PC-3 (cell line): ENCODE measurements at regions of chr21 and their contacts with region 1.

Region 1: DNA sequence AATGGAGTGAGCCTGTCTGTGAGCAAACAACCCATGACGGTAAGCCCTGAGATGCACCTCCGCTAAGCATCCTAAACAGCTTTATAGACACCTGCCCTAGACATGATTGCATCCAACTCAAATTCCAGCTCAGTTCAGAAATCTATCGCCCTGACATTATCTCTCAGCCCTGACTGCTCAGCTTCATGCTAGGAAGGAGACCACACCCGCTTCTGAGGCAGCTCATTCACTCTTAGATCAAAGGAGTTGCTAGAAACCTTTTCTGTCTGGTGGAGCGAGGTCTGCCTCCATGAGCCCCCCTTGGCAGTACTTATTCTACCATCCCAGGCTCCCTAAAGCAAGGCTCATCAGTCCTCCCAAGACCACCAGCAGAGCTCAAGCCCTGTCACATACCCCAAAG is 17.0 kb downstream of the IL10RB start:
- DNase-seq: no peak
- ATAC-seq: no peak
- H3K4me3 ChIP-seq: no peak overlapping the region
- H3K27ac ChIP-seq: no peak overlapping the region
- H3K4me1 ChIP-seq: peaks cover 15% of the 10 kb centered on the region
- H3K27me3 ChIP-seq: no peaks in the 10 kb centered on the region
- CTCF ChIP-seq: no peak

Region 2: DNA sequence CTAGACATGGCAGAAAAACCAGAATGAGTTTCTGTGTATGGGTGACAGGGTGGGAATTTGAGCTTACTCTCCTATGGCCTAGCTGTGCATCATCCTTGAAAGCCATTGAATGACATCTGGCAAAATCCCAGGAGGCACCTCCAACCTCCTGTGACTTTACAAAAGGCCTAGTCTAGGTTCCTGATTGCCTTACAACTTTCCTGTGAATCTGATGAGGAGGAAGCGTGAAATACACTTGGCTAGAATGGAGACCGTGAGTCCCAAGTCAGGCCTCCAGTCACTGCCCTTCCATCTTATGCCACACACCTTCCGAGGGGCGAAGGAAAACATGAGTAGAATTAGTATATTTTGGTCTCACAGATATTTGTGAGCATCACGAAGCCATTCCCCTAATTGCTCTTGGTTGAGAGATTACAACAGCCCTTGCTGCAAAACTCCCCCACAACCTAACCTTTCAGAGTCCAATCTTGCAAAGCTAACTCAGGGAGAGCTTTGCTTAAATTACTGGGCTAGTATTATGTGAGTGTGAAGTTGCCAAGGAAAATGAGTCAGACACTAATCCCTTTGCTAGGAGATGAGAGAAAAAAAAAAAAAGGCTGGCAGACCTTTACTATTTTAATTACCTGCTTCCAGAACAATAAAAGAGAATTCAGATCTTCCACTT is 475.4 kb before region 1 on chr21:
- CTCF ChIA-PET with region 1: interaction called, 11 read pairs
- POLR2A ChIA-PET with region 1: no interaction called
- intact Hi-C with region 1: no loop called
- DNase-seq: peak; percentile 25
- ATAC-seq: peak; percentile 77
- H3K4me3 ChIP-seq: no peak overlapping the region
- H3K27ac ChIP-seq: no peak overlapping the region
- H3K4me1 ChIP-seq: no peaks in the 10 kb centered on the region
- H3K27me3 ChIP-seq: 0 out of 2 replicates have a peak, but pooled peaks cover 8% of the 10 kb centered on the region
- CTCF ChIP-seq: no peak

Region 3: DNA sequence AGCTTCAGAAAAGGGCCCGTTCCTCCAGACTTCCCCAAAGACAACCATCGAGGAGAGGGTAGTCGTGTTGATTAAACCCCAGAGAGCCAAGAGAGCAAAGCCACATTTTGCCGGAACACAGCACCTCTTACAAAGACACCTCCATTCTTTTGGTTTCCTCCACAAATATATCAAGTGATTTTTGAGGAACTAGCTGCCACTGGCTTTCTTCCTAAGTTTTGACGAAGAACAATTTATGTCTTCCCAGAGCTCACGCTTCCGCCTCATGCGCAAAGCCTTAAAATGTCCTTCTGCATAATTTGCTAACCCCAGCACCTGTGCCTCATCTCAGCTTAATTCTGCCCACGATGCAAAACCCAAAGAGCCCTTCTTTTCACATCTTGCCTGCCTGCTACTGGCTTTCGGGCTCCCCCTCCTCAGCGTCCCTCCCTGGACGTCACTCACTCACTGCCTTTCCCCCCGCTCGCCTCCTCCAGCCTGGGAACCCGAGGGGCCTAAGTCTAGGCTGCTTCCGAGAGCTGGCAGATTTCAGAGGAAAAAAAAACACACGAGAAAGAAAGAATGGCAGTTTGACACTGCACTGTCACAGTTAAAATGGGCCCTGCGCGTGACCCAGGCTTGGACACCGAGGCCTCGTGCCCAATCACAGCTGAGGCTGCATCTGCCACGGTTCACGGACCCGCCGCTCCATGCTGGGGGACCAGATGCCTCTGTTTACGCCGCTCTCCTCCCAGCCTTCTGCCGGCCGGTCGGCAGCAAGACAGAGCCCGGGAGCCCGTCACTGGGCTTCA is 131.1 kb before region 1 on chr21:
- CTCF ChIA-PET with region 1: no interaction called
- POLR2A ChIA-PET with region 1: no interaction called
- intact Hi-C with region 1: no loop called
- DNase-seq: no peak
- ATAC-seq: no peak
- H3K4me3 ChIP-seq: no peak overlapping the region
- H3K27ac ChIP-seq: no peak overlapping the region
- H3K4me1 ChIP-seq: peaks cover 3% of the 10 kb centered on the region; the same call in 1 of the 2 replicates
- H3K27me3 ChIP-seq: peaks cover 69% of the 10 kb centered on the region
- CTCF ChIP-seq: no peak

Region 4: GRCh38 chr21:33185852-33186251 is 97.4 kb before region 1 on chr21:
- CTCF ChIA-PET with region 1: no interaction called
- POLR2A ChIA-PET with region 1: no interaction called
- intact Hi-C with region 1: no loop called
- DNase-seq: no peak
- ATAC-seq: no peak
- H3K4me3 ChIP-seq: no peak overlapping the region
- H3K27ac ChIP-seq: no peak overlapping the region
- H3K4me1 ChIP-seq: no peaks in the 10 kb centered on the region
- H3K27me3 ChIP-seq: peaks cover 51% of the 10 kb centered on the region
- CTCF ChIP-seq: no peak